Activated CD4-positive, alpha-beta T cell treated with anti-CD3 and anti-CD28 coated beads, Interleukin-2, amount 10 ng/mL, durations not matched to agents 24 days and 14 days (primary cell): ENCODE measurements at regions of chr20 and their contacts with region 1.

Region 1: GRCh38 chr20:1657556-1658334 is at the start of gene SIRPG:
- DNase-seq: peak; percentile 85
- H3K4me3 Mint-ChIP-seq: peak within 1 kb of the TSS; percentile 94
- H3K27ac Mint-ChIP-seq: peak within 1 kb of the TSS; percentile 98
- H3K4me1 Mint-ChIP-seq: peaks cover 84% of the 10 kb centered on the region
- H3K27me3 Mint-ChIP-seq: no peaks in the 10 kb centered on the region
- total RNA-seq, gene SIRPG: 33.8 and 34.3 TPM in 2 replicates

Region 2: GRCh38 chr20:1623501-1624265 is 34.1 kb before region 1 on chr20:
- intact Hi-C with region 1: loop called (anchors 1 kb)
- DNase-seq: no peak
- H3K4me3 Mint-ChIP-seq: no peak overlapping the region
- H3K27ac Mint-ChIP-seq: peak overlapping the region; percentile 17
- H3K4me1 Mint-ChIP-seq: peaks cover 81% of the 10 kb centered on the region
- H3K27me3 Mint-ChIP-seq: no peaks in the 10 kb centered on the region

Region 3: GRCh38 chr20:1671891-1672669 is 14.3 kb after region 1 on chr20:
- intact Hi-C with region 1: loop called (anchors 1 kb)
- DNase-seq: peak; percentile 68
- H3K4me3 Mint-ChIP-seq: peak overlapping the region; percentile 72
- H3K27ac Mint-ChIP-seq: peak overlapping the region; percentile 91
- H3K4me1 Mint-ChIP-seq: peaks cover 82% of the 10 kb centered on the region
- H3K27me3 Mint-ChIP-seq: no peaks in the 10 kb centered on the region